CD14-positive monocyte (primary cell): ENCODE measurements at regions of chr10 and their contacts with region 1.

Region 1: DNA sequence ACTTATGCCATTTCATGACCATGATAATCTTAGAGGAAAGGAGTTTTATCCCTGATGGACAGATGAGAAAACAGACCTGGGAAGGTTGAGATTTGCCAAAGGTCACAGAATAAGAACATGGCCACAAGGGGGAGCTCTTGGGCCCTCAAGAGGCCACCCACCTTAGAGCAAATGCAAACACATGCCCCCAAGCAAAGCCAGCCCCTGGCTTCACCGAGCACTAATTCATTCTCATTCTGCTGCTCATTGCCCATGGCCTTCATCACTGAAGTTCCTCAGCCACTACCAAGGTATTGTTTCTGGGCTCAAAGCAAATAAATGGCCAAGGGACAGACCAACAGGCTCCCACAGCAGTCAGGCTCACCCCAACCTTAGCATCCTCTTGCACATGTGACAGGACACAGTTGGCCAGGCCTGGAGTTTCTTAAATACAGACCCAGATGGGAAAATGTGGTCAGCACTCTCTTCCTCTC is 44.2 kb downstream of the PDLIM1 start:
- DNase-seq: peak; percentile 37 to 55 (median 38)
- H3K4me3 ChIP-seq: no peak overlapping the region
- H3K4me3 Mint-ChIP-seq: no peak overlapping the region
- H3K27ac ChIP-seq: no peak overlapping the region
- H3K27ac Mint-ChIP-seq: no peak overlapping the region
- H3K4me1 ChIP-seq: no peaks in the 10 kb centered on the region
- H3K4me1 Mint-ChIP-seq: peaks cover 4% of the 10 kb centered on the region
- H3K27me3 ChIP-seq: no peaks in the 10 kb centered on the region
- H3K27me3 Mint-ChIP-seq: peaks cover 0 to 7% (median 0%) of the 10 kb centered on the region in 3 donors
- CTCF ChIP-seq: peak; percentile 88

Region 2: DNA sequence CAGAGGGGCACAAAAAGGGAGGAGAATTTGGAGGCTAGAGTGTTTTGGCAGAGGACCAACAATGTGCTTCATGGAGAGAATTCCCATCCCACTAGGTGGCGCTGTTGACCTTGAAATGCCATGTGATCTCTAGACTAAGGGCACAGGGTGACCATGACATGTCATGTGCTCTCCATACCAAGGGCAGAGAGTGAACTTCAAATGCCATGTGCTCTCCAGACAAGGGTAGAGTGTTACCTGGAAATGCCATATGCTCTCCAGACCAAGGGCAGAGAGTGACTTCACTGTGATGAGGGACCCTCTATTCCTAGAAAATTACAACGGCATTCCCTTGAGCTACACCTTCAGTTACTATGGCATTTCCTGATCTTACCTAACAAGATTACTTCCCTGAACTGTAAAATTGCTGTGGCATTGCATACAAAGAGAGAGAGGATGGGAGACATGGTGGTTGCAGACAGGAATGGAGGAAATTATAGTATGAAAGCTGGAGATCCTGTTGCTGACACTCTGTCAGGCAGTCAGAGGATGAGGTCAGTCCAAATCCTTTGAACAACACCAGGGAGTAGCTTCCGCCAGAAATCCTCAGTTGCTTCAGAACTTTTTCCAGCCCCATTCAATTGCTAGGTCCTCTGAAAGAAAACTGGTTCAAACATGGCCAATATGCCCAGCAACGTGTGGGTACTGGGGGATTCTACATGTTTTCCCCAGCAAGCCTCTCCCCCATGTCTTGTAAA is 113.4 kb before region 1 on chr10:
- intact Hi-C with region 1: loop called in 1 of 2 experiments (anchors 5 kb)
- DNase-seq: peak; percentile 38 to 64 (median 46)
- H3K4me3 ChIP-seq: no peak overlapping the region
- H3K4me3 Mint-ChIP-seq: no peak overlapping the region
- H3K27ac ChIP-seq: no peak overlapping the region
- H3K27ac Mint-ChIP-seq: no peak overlapping the region
- H3K4me1 ChIP-seq: no peaks in the 10 kb centered on the region
- H3K4me1 Mint-ChIP-seq: no peaks in the 10 kb centered on the region
- H3K27me3 ChIP-seq: no peaks in the 10 kb centered on the region
- H3K27me3 Mint-ChIP-seq: peaks cover 0 to 3% (median 2%) of the 10 kb centered on the region in 3 donors
- CTCF ChIP-seq: peak; percentile 82

Region 3: DNA sequence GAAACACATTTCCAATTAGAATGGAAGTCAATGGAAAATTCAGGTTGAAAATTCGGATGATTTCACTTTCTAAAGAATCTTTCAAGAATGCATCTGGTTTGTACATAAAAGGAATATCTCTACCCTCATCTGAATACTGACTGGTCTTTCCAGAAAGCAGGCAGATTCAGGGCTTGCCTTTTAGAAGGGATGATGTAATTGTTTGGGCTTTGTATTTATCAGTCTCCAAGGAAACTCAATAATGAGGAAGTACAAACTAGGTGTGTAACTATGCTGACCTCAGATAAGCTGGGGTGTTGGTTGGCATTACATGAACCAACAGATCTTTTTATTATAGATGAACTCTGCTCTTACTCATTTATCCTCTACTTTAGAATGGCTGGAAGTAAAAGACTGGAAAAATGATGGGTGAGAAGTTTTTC is 20.1 kb after region 1 on chr10:
- intact Hi-C with region 1: no loop called
- DNase-seq: peak; percentile 60 to 83 (median 77)
- H3K4me3 ChIP-seq: no peak overlapping the region
- H3K4me3 Mint-ChIP-seq: no peak overlapping the region
- H3K27ac ChIP-seq: no peak overlapping the region
- H3K27ac Mint-ChIP-seq: peak overlapping the region; percentile 48 to 88 (median 72)
- H3K4me1 ChIP-seq: peaks cover 0 to 5% of the 10 kb centered on the region in 2 donors
- H3K4me1 Mint-ChIP-seq: peaks cover 9% of the 10 kb centered on the region
- H3K27me3 ChIP-seq: no peaks in the 10 kb centered on the region
- H3K27me3 Mint-ChIP-seq: peaks cover 0 to 1% (median 1%) of the 10 kb centered on the region in 3 donors
- CTCF ChIP-seq: no peak